CD8-positive, alpha-beta T cell (primary cell): ENCODE measurements at regions of chr12 and their contacts with region 1.

Region 1: GRCh38 chr12:121733849-121734248 is 21.3 kb downstream of the TMEM120B start:
- DNase-seq: no peak
- ATAC-seq: no peak
- H3K4me3 ChIP-seq: no peak overlapping the region
- H3K4me3 Mint-ChIP-seq: no peak overlapping the region
- H3K27ac ChIP-seq: no peak overlapping the region
- H3K27ac Mint-ChIP-seq: no peak overlapping the region
- H3K4me1 ChIP-seq: no peaks in the 10 kb centered on the region
- H3K4me1 Mint-ChIP-seq: no peaks in the 10 kb centered on the region
- H3K27me3 ChIP-seq: no peaks in the 10 kb centered on the region
- H3K27me3 Mint-ChIP-seq: no peaks in the 10 kb centered on the region
- CTCF ChIP-seq: no peak

Region 2: DNA sequence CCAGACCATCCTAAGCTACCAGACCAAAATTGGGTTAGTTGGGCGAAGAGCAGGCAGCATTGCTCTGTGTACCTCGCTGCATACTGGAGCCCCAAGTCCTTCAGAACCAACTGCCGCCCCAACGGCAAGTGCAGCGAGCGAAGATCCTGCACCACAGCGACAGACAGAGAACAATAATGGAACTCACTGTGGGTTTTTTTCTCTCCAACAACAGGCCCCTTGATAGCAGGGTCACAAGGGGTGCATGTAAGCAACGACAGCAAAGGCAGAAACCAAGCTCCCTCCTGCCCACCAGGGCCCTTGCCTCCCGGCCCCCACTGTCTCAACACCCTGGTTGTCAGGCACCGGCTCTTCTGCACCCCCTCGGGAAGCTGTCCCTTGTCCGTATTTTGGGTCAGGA is 294.9 kb before region 1 on chr12:
- CTCF ChIA-PET with region 1: no interaction called
- POLR2A ChIA-PET with region 1: no interaction called
- intact Hi-C with region 1: no loop called
- DNase-seq: no peak
- ATAC-seq: no peak
- H3K4me3 ChIP-seq: no peak overlapping the region
- H3K4me3 Mint-ChIP-seq: no peak overlapping the region
- H3K27ac ChIP-seq: no peak overlapping the region
- H3K27ac Mint-ChIP-seq: no peak overlapping the region
- H3K4me1 ChIP-seq: no peaks in the 10 kb centered on the region
- H3K4me1 Mint-ChIP-seq: peaks cover 2% of the 10 kb centered on the region
- H3K27me3 ChIP-seq: no peaks in the 10 kb centered on the region
- H3K27me3 Mint-ChIP-seq: no peaks in the 10 kb centered on the region
- CTCF ChIP-seq: no peak

Region 3: GRCh38 chr12:121719926-121720414 is 13.9 kb before region 1 on chr12:
- CTCF ChIA-PET with region 1: no interaction called
- POLR2A ChIA-PET with region 1: no interaction called
- intact Hi-C with region 1: no loop called
- DNase-seq: no peak
- ATAC-seq: no peak
- H3K4me3 ChIP-seq: no peak overlapping the region
- H3K4me3 Mint-ChIP-seq: no peak overlapping the region
- H3K27ac ChIP-seq: no peak overlapping the region
- H3K27ac Mint-ChIP-seq: no peak overlapping the region
- H3K4me1 ChIP-seq: no peaks in the 10 kb centered on the region
- H3K4me1 Mint-ChIP-seq: peaks cover 10% of the 10 kb centered on the region
- H3K27me3 ChIP-seq: no peaks in the 10 kb centered on the region
- H3K27me3 Mint-ChIP-seq: no peaks in the 10 kb centered on the region
- CTCF ChIP-seq: no peak

Region 4: DNA sequence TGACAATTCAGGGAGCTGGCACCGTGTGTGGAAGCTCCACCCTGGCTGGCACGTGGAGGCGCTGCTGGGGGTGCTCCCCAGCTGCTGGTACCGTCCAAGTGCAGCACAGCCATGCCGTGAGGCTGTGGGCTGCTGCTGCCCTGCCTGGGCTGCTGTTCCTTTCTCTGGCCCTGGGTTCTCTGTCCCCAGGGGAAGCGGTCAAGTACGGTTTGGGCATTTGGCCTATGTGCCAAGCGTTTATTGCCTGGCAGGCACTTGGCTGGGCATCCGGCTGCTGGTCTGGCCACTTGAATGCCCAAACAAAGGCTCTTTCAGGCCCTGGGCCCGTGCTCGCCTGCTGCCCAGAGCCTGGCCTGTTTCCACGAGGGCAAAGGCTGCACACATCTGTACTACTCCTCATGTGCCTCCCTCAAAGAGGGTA is 20.0 kb after region 1 on chr12:
- CTCF ChIA-PET with region 1: no interaction called
- POLR2A ChIA-PET with region 1: no interaction called
- intact Hi-C with region 1: loop called in 1 of 2 experiments (anchors 2 kb)
- DNase-seq: no peak
- ATAC-seq: no peak
- H3K4me3 ChIP-seq: no peak overlapping the region
- H3K4me3 Mint-ChIP-seq: no peak overlapping the region
- H3K27ac ChIP-seq: no peak overlapping the region
- H3K27ac Mint-ChIP-seq: no peak overlapping the region
- H3K4me1 ChIP-seq: peaks cover 11% of the 10 kb centered on the region
- H3K4me1 Mint-ChIP-seq: peaks cover 12% of the 10 kb centered on the region
- H3K27me3 ChIP-seq: no peaks in the 10 kb centered on the region
- H3K27me3 Mint-ChIP-seq: no peaks in the 10 kb centered on the region
- CTCF ChIP-seq: no peak